Caco-2 (cell line): ENCODE measurements at regions of chr2 and their contacts with region 1.

Region 1: GRCh38 chr2:21070341-21071257 is 26.7 kb upstream of the APOB start:
- DNase-seq: peak in 1 of 2 experiments; percentile 50
- H3K4me3 ChIP-seq: no peak overlapping the region
- H3K4me3 Mint-ChIP-seq: peak overlapping the region; percentile 7
- H3K27ac Mint-ChIP-seq: peak overlapping the region; percentile 32
- H3K4me1 ChIP-seq: peaks cover 20% of the 10 kb centered on the region
- H3K4me1 Mint-ChIP-seq: peaks cover 27% of the 10 kb centered on the region
- H3K27me3 ChIP-seq: no peaks in the 10 kb centered on the region
- H3K27me3 Mint-ChIP-seq: no peaks in the 10 kb centered on the region
- CTCF ChIP-seq: no peak

Region 2: DNA sequence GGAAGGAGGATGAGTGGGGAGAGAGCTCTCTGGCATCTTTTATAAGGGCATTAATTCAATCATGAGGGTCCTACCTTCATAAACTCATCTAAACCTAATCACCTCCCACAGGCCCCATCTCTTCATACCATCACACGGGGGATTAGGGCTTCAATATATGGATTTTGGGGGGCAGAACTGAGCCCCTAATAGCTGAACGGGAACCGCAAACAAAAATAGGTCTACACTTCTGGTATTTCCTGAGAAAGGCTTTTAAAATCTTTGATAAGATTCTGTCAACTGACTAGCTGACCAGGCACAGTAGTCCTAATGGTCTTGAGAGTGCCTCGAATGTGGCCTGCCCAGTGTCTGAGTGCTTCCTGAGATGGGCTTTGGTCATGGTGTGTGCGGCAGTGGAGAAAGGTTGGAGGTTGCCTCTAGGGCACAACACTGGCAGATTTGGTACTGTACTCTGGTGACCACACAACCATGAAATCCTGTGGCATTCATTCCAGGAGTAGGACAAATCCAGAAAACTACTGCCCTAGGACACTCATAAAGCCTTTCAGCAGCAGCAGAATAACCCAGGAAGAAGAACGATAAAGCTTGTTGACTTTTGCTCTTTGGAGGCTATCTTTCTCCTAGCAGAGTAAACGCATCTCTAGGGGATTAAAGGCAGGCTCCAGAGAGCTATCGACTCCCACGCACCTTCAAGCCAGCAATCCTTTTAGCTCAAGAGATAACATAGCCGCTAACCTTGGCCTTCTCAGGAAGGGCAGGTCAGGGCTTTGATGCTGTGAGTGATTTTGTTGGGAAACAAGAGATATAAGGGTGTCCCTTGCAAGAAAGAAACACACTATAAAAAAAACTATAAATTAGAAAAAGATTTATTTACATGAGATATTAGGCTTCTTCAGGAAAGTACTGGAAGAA is 14.5 kb before region 1 on chr2:
- CTCF ChIA-PET with region 1: interaction called, 3 read pairs
- POLR2A ChIA-PET with region 1: no interaction called
- intact Hi-C with region 1: loop called (anchors 1 kb)
- DNase-seq: peak; percentile 62 to 77
- H3K4me3 ChIP-seq: no peak overlapping the region
- H3K4me3 Mint-ChIP-seq: no peak overlapping the region
- H3K27ac Mint-ChIP-seq: no peak overlapping the region
- H3K4me1 ChIP-seq: peaks cover 21% of the 10 kb centered on the region
- H3K4me1 Mint-ChIP-seq: peaks cover 7% of the 10 kb centered on the region
- H3K27me3 ChIP-seq: no peaks in the 10 kb centered on the region
- H3K27me3 Mint-ChIP-seq: no peaks in the 10 kb centered on the region
- CTCF ChIP-seq: no peak

Region 3: GRCh38 chr2:21096458-21096857 is 25.9 kb after region 1 on chr2:
- CTCF ChIA-PET with region 1: no interaction called
- POLR2A ChIA-PET with region 1: no interaction called
- intact Hi-C with region 1: loop called (anchors 2 kb)
- DNase-seq: no peak
- H3K4me3 ChIP-seq: no peak overlapping the region
- H3K4me3 Mint-ChIP-seq: no peak overlapping the region
- H3K27ac Mint-ChIP-seq: no peak overlapping the region
- H3K4me1 ChIP-seq: peaks cover 4% of the 10 kb centered on the region; the same call in 1 of the 2 replicates
- H3K4me1 Mint-ChIP-seq: peaks cover 17% of the 10 kb centered on the region
- H3K27me3 ChIP-seq: no peaks in the 10 kb centered on the region
- H3K27me3 Mint-ChIP-seq: no peaks in the 10 kb centered on the region
- CTCF ChIP-seq: no peak